ENCODE measurements at regions of chr6 and their contacts with region 1.

Region 1: DNA sequence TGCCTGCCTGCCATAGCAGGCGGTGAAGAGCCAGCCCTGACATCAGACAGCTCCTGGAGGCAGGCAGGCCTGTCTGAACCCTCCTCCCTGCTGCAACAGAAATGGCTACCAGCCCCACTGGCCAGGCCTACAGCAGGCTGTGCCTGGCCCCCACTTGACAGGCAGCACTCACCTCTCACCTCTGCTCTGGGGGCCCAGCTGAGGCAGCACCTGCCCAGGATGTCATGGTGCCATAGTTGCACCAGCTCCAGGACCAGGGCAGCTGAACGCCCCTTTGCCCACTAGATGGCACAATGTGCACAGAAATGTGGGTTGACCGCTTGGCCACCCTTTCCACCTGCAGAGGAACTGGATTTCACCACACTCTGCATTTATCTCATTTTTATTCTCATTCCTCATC is 30.6 kb downstream of the MRPL14 start:
- DNase-seq: peak; percentile 27
- ATAC-seq: peak; percentile 99
- H3K4me3 ChIP-seq: no peak overlapping the region
- H3K27ac ChIP-seq: no peak overlapping the region
- H3K4me1 ChIP-seq: no peaks in the 10 kb centered on the region
- H3K27me3 ChIP-seq: no peaks in the 10 kb centered on the region
- CTCF ChIP-seq: peak; percentile 85 to 94 (median 85)
- EP300 ChIP-seq: no peak
- POLR2A ChIP-seq: no peak
- RAD21 ChIP-seq: peak; percentile 90

Region 2: GRCh38 chr6:43541774-43542471 is 554.7 kb before region 1 on chr6:
- CTCF ChIA-PET with region 1: no interaction called
- POLR2A ChIA-PET with region 1: no interaction called
- RAD21 ChIA-PET with region 1: no interaction called
- SMC1A ChIA-PET with region 1: no interaction called
- in situ Hi-C with region 1: no loop called
- intact Hi-C with region 1: no loop called
- DNase-seq: no peak
- ATAC-seq: peak; percentile 85
- H3K4me3 ChIP-seq: no peak overlapping the region
- H3K27ac ChIP-seq: no peak overlapping the region
- H3K4me1 ChIP-seq: peaks cover 8% of the 10 kb centered on the region
- H3K27me3 ChIP-seq: no peaks in the 10 kb centered on the region
- CTCF ChIP-seq: no peak
- EP300 ChIP-seq: no peak
- POLR2A ChIP-seq: no peak
- RAD21 ChIP-seq: no peak

Region 3: DNA sequence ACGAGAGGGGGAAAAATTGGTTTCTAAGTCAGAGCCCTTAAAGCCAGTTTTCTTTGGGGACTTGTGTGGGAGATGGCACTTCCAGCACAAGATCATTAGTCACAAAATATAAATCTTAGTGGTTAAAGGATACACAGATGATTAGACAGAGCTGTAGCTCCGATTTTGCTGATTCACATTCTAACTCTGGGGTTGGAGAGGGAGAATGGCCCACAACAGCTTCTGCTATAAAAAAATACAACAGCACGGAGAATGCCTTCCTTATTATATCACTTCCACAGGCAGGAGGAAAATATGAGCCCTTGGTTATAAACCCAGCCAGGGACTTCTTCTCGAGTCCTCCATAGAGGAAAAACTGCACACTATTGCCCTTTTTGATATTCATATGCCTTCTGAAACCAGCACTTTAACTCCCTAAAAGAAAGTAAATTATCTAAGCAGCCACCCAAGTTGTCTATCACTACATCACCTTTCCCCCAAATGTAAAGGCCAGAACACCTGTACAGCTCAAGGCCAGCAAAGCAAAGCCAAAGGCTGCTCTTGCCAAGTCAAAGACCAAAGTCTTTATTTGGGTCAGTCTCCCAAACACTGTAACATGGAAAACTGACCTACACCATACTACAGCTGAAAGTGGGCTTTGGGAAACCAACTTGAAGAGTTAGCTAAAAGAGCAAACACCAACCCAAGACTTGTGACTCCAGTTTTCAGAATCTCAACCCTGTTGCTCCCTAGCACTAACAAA is 20.2 kb after region 1 on chr6:
- CTCF ChIA-PET with region 1: interaction called, 19 read pairs
- POLR2A ChIA-PET with region 1: interaction called, 3 read pairs
- RAD21 ChIA-PET with region 1: interaction called, 4 read pairs
- SMC1A ChIA-PET with region 1: interaction called, 3 read pairs
- in situ Hi-C with region 1: no loop called
- intact Hi-C with region 1: no loop called
- DNase-seq: no peak
- ATAC-seq: no peak
- H3K4me3 ChIP-seq: no peak overlapping the region
- H3K27ac ChIP-seq: no peak overlapping the region
- H3K4me1 ChIP-seq: peaks cover 3% of the 10 kb centered on the region; the same call in 1 of the 2 replicates
- H3K27me3 ChIP-seq: no peaks in the 10 kb centered on the region
- CTCF ChIP-seq: no peak
- EP300 ChIP-seq: no peak
- POLR2A ChIP-seq: no peak
- RAD21 ChIP-seq: no peak

Region 4: GRCh38 chr6:44161997-44162338 is 65.4 kb after region 1 on chr6:
- CTCF ChIA-PET with region 1: interaction called, 31 read pairs
- POLR2A ChIA-PET with region 1: no interaction called
- RAD21 ChIA-PET with region 1: interaction called, 5 read pairs
- SMC1A ChIA-PET with region 1: interaction called, 7 read pairs
- in situ Hi-C with region 1: loop called (anchors 10 kb)
- intact Hi-C with region 1: no loop called
- DNase-seq: no peak
- ATAC-seq: peak; percentile 36
- H3K4me3 ChIP-seq: no peak overlapping the region
- H3K27ac ChIP-seq: no peak overlapping the region
- H3K4me1 ChIP-seq: no peaks in the 10 kb centered on the region
- H3K27me3 ChIP-seq: peaks cover 0 to 4% of the 10 kb centered on the region in 2 experiments; a peak in 1 of 4 replicates
- CTCF ChIP-seq: no peak
- EP300 ChIP-seq: no peak
- POLR2A ChIP-seq: no peak
- RAD21 ChIP-seq: no peak

Region 5: GRCh38 chr6:44237813-44238433 is 141.3 kb after region 1 on chr6:
- CTCF ChIA-PET with region 1: interaction called, 9 read pairs
- POLR2A ChIA-PET with region 1: no interaction called
- RAD21 ChIA-PET with region 1: interaction called, 10 read pairs
- SMC1A ChIA-PET with region 1: interaction called, 4 read pairs
- in situ Hi-C with region 1: loop called (anchors 10 kb)
- intact Hi-C with region 1: loop called (anchors 1 kb)
- DNase-seq: no peak
- ATAC-seq: peak; percentile 97
- H3K4me3 ChIP-seq: peak overlapping the region; percentile 54; the same call in 1 of the 2 replicates
- H3K27ac ChIP-seq: peak overlapping the region; percentile 71
- H3K4me1 ChIP-seq: peaks cover 8% of the 10 kb centered on the region
- H3K27me3 ChIP-seq: no peaks in the 10 kb centered on the region
- CTCF ChIP-seq: peak; percentile 91 to 95 (median 94)
- EP300 ChIP-seq: no peak
- POLR2A ChIP-seq: peak; percentile 83
- RAD21 ChIP-seq: peak; percentile 53

Measured in GM12878 (cell line).